Activated CD4-positive, alpha-beta memory T cell treated with anti-CD3 and anti-CD28 coated beads for 36 hours (primary cell): ENCODE measurements at regions of chr5 and their contacts with region 1.

Region 1: DNA sequence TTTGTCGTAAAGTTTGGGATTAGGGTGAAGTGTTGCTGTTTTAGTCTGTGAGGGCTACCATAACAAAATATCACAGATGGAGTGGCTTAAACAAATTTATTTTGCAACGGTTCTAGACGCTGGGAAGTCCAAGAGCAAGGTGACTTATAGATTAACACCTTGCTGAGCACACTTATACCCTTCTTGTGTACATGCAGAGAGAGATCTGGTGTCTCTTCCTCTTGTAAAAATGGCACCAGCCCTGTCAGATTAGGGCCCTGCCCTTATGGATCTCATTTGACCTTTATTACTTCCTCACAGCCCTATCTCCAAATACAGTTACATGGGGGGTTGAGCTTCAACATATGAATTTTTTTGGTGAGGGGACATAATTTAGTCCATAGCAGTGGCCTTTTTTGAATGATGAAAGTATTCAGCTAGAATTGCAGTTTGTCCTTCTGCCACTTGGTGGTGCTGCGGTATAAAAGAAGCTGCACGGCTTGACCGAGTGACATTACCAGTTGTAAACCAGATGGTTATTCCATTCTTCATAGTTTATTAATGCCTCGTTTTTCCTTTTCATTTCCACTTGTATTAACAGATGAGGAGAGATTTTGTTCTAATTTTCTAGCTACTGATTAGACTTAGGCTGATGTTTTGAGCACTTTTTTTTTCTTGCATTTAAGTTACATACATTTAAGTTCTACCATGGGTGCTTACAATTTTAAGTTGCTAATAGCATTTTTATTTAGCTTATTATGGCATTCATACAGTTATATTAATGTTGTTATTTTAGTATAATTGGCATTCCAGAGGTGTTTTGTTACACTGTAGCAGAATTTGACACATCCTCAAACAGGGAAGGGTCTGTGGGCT is 19.4 kb downstream of the DCP2 start:
- DNase-seq: peak; percentile 83
- H3K4me3 Mint-ChIP-seq: no peak overlapping the region
- H3K27ac Mint-ChIP-seq: no peak overlapping the region
- H3K4me1 Mint-ChIP-seq: peaks cover 23% of the 10 kb centered on the region
- H3K27me3 Mint-ChIP-seq: no peaks in the 10 kb centered on the region

Region 2: GRCh38 chr5:112049738-112050137 is 946.3 kb before region 1 on chr5:
- CTCF ChIA-PET with region 1: no interaction called
- POLR2A ChIA-PET with region 1: no interaction called
- intact Hi-C with region 1: no loop called
- DNase-seq: no peak
- H3K4me3 Mint-ChIP-seq: no peak overlapping the region
- H3K27ac Mint-ChIP-seq: no peak overlapping the region
- H3K4me1 Mint-ChIP-seq: no peaks in the 10 kb centered on the region
- H3K27me3 Mint-ChIP-seq: peaks cover 1% of the 10 kb centered on the region

Region 3: GRCh38 chr5:112983363-112983762 is 12.6 kb before region 1 on chr5:
- CTCF ChIA-PET with region 1: interaction called, 33 read pairs
- POLR2A ChIA-PET with region 1: no interaction called
- intact Hi-C with region 1: no loop called
- DNase-seq: no peak
- H3K4me3 Mint-ChIP-seq: no peak overlapping the region
- H3K27ac Mint-ChIP-seq: no peak overlapping the region
- H3K4me1 Mint-ChIP-seq: peaks cover 61% of the 10 kb centered on the region
- H3K27me3 Mint-ChIP-seq: no peaks in the 10 kb centered on the region

Region 4: GRCh38 chr5:113212244-113212920 is 216.4 kb after region 1 on chr5:
- CTCF ChIA-PET with region 1: no interaction called
- POLR2A ChIA-PET with region 1: no interaction called
- intact Hi-C with region 1: loop called (anchors 5 kb)
- DNase-seq: no peak
- H3K4me3 Mint-ChIP-seq: no peak overlapping the region
- H3K27ac Mint-ChIP-seq: no peak overlapping the region
- H3K4me1 Mint-ChIP-seq: no peaks in the 10 kb centered on the region
- H3K27me3 Mint-ChIP-seq: no peaks in the 10 kb centered on the region

Region 5: GRCh38 chr5:113330533-113331208 is 334.7 kb after region 1 on chr5:
- CTCF ChIA-PET with region 1: interaction called, 51 read pairs
- POLR2A ChIA-PET with region 1: no interaction called
- intact Hi-C with region 1: loop called (anchors 1 kb)
- DNase-seq: no peak
- H3K4me3 Mint-ChIP-seq: no peak overlapping the region
- H3K27ac Mint-ChIP-seq: no peak overlapping the region
- H3K4me1 Mint-ChIP-seq: peaks cover 13% of the 10 kb centered on the region
- H3K27me3 Mint-ChIP-seq: no peaks in the 10 kb centered on the region

Region 6: GRCh38 chr5:113378959-113379541 is 383.1 kb after region 1 on chr5:
- CTCF ChIA-PET with region 1: interaction called, 18 read pairs
- POLR2A ChIA-PET with region 1: no interaction called
- intact Hi-C with region 1: loop called (anchors 5 kb)
- DNase-seq: peak; percentile 74
- H3K4me3 Mint-ChIP-seq: no peak overlapping the region
- H3K27ac Mint-ChIP-seq: no peak overlapping the region
- H3K4me1 Mint-ChIP-seq: peaks cover 27% of the 10 kb centered on the region
- H3K27me3 Mint-ChIP-seq: peaks cover 5% of the 10 kb centered on the region

Region 7: DNA sequence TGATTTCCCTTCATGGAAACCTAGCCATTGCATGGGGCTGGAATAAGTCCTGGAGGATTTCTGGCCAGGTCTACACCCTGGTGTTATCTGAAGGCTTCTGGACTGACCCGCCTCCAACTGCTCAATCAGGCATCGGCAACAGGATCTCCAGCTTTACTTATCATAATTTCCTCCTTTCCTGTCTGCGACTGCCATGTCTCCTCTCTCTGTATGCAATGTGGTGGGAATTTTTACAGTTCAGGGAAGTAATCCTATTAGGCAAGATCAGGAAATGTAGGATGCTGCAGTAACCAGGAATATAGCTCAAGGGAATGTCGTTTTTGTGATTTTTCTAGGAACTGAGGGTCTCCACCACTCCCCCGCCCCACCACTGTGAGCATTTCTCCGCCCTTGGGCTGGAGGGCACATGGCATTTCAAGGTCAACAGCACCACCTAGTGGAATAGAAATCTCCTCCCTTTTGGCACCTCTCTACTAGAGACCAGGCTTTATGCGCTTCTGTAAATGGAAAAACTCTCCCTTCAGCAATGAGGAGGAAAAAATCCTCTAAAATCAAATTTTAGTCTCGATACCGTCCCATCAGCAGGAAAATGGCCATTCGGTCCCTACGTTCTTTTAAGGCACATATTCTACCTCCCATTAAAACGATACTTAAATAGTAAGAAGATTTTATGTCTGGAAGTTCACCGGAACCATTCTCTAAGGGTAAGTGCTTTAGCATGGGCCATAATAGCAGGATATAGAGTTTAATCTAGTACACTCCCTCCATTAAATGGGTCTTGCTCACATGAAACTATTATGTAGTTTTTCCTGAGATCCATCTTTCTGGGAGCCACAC is 610.5 kb after region 1 on chr5:
- CTCF ChIA-PET with region 1: interaction called, 30 read pairs
- POLR2A ChIA-PET with region 1: no interaction called
- intact Hi-C with region 1: loop called (anchors 1 kb)
- DNase-seq: peak; percentile 44
- H3K4me3 Mint-ChIP-seq: no peak overlapping the region
- H3K27ac Mint-ChIP-seq: no peak overlapping the region
- H3K4me1 Mint-ChIP-seq: peaks cover 3% of the 10 kb centered on the region
- H3K27me3 Mint-ChIP-seq: peaks cover 12% of the 10 kb centered on the region